Sigmoid colon (tissue), 7 donors: ENCODE measurements at regions of chr20 and their contacts with region 1.

Region 1: GRCh38 chr20:815914-816606 is 17.5 kb upstream of the FAM110A start:
- DNase-seq: no peak
- H3K4me3 ChIP-seq: no peak overlapping the region
- H3K27ac ChIP-seq: no peak overlapping the region
- H3K4me1 ChIP-seq: no peaks in the 10 kb centered on the region
- H3K27me3 ChIP-seq: peaks cover 0 to 46% (median 0%) of the 10 kb centered on the region in 3 donors
- CTCF ChIP-seq: peak; percentile 89 to 99 (median 98)
- EP300 ChIP-seq: no peak
- POLR2A ChIP-seq: no peak

Region 2: DNA sequence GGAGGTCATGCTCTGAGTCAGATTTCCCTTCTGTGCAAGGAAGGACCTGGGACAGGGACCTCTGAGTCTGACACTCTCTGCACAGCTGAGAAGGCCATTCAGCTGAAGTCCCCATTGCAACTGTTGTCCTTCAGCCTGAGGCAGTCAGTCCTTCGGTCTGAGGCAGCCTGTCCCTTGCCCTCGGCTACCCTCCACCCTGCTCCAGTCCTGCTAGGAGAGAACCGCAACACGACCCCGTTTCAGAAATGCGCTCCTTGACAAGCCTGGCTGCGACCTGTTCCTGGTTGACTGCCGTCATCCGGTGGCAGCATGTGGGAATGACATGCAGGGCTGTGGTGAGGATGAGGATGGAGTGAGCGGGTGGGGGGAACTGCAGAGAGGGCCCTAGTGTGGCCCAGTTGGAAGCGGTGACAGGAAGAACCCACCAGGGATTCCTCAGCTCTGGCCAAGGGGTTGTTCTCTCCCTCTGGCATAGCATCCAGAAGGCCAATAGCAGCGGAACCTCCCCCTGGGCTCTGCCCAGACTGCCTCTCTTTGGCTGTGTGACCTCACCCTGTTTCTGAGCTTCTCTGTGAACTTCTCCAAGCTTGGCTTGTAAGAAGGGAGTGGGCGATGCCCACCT is 140.4 kb after region 1 on chr20:
- intact Hi-C with region 1: loop called (anchors 1 kb)
- DNase-seq: peak; percentile 75
- H3K4me3 ChIP-seq: no peak overlapping the region
- H3K27ac ChIP-seq: no peak overlapping the region
- H3K4me1 ChIP-seq: no peaks in the 10 kb centered on the region
- H3K27me3 ChIP-seq: peaks cover 0 to 59% (median 25%) of the 10 kb centered on the region in 3 donors
- CTCF ChIP-seq: peak; percentile 88 to 99 (median 90)
- EP300 ChIP-seq: no peak
- POLR2A ChIP-seq: no peak

Region 3: GRCh38 chr20:1108437-1108920 is 292.4 kb after region 1 on chr20:
- intact Hi-C with region 1: loop called (anchors 10 kb)
- DNase-seq: no peak
- H3K4me3 ChIP-seq: no peak overlapping the region
- H3K27ac ChIP-seq: no peak overlapping the region
- H3K4me1 ChIP-seq: peaks cover 0 to 4% (median 0%) of the 10 kb centered on the region in 4 donors
- H3K27me3 ChIP-seq: no peaks in the 10 kb centered on the region
- CTCF ChIP-seq: peak; percentile 19 to 58 (median 40)
- EP300 ChIP-seq: no peak
- POLR2A ChIP-seq: no peak

Region 4: DNA sequence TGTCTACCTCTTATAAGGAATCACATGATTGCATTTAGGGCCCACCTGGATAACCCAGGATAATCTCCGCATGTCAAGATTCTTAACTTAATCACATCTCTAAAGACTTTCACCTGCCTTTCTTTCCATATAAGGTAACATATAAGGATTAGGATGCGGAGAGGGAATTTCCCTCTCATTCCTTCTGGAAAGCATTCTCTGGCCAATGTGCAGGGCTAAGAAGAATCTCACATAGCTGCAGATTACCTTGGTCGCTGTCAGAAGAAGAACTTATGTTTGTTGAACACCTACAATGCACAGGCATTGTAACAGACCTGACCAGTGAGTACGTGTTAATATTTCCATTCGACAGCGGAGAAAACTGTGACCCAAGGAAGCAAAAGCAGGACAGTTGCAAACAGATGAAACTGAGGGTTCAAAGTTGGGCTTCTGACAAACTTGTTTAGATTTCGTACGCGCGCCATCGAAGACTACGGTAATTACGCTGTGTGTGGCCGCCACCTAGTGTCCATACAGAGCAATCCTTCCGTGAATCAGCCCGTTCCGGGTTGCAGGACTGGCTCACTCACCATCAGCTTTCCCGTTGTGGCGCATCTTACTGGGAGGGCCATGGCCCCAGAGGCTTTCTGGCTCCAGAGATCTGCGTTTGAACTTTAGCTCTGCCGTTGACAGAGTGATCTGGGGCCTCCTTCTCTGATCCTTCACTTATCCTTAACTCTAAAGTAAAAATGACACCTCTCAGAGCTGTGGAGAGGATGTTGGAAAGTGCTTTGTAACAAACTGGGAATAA is 396.7 kb after region 1 on chr20:
- intact Hi-C with region 1: loop called (anchors 5 kb)
- DNase-seq: peak; percentile 77
- H3K4me3 ChIP-seq: no peak overlapping the region
- H3K27ac ChIP-seq: no peak overlapping the region
- H3K4me1 ChIP-seq: peaks cover 0 to 8% (median 7%) of the 10 kb centered on the region in 4 donors
- H3K27me3 ChIP-seq: peaks cover 0 to 12% (median 5%) of the 10 kb centered on the region in 3 donors
- CTCF ChIP-seq: peak; percentile 47 to 78 (median 66)
- EP300 ChIP-seq: no peak
- POLR2A ChIP-seq: no peak